ENCODE measurements at regions of chrX and their contacts with region 1.

Region 1: GRCh38 chrX:69222103-69223090 is 57.1 kb upstream of the PJA1 start:
- DNase-seq: peak; percentile 72
- H3K4me3 Mint-ChIP-seq: no peak overlapping the region
- H3K27ac Mint-ChIP-seq: no peak overlapping the region
- H3K4me1 Mint-ChIP-seq: no peaks in the 10 kb centered on the region
- H3K27me3 Mint-ChIP-seq: peaks cover 23% of the 10 kb centered on the region
- CTCF ChIP-seq: peak; percentile 66

Region 2: DNA sequence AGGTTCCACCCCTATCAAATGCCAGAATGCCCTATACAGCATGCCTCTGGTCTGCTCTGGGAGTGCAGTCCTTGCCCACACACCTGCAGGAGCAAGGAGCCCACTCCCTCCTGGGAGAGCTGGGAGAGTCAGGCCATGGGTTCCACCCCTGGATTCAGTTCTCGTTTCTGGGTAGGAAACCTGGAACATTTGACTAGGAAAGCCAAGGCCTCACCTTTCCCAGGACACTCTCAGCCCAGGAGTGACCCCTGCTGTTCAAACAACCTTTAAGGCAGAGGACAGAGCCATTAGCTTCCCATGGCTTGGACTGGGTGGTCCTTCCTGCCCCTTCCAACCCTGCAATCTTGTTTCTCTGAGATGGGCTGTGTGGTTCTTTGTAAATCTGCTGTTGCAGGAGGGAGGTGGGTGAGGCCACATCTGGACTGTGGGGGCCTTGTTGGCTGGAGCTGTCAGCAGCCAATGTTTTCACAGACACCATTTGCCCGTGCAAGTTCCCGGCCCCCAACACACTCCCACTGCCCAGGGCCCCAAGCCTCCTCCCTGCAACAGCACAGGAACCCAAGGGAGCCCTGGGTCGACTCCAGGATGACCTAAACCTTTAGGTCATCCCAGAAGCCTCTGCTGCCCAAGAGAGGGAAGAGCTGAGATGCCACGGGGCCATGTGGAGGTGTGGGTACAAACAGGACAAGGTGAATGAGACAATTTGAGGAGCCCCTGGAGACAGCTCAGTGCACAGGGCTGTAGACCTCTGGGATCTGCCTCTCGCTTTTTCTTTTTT is 161.6 kb before region 1 on chrX:
- CTCF ChIA-PET with region 1: interaction called, 13 read pairs
- POLR2A ChIA-PET with region 1: no interaction called
- intact Hi-C with region 1: loop called (anchors 1 kb)
- DNase-seq: peak; percentile 65
- H3K4me3 Mint-ChIP-seq: no peak overlapping the region
- H3K27ac Mint-ChIP-seq: no peak overlapping the region
- H3K4me1 Mint-ChIP-seq: no peaks in the 10 kb centered on the region
- H3K27me3 Mint-ChIP-seq: peaks cover 24% of the 10 kb centered on the region
- CTCF ChIP-seq: peak; percentile 27

Region 3: GRCh38 chrX:69133921-69134542 is 88.4 kb before region 1 on chrX:
- CTCF ChIA-PET with region 1: interaction called, 3 read pairs
- POLR2A ChIA-PET with region 1: no interaction called
- intact Hi-C with region 1: loop called (anchors 1 kb)
- DNase-seq: peak; percentile 65
- H3K4me3 Mint-ChIP-seq: no peak overlapping the region
- H3K27ac Mint-ChIP-seq: no peak overlapping the region
- H3K4me1 Mint-ChIP-seq: no peaks in the 10 kb centered on the region
- H3K27me3 Mint-ChIP-seq: peaks cover 63% of the 10 kb centered on the region
- CTCF ChIP-seq: peak; percentile 51

Region 4: DNA sequence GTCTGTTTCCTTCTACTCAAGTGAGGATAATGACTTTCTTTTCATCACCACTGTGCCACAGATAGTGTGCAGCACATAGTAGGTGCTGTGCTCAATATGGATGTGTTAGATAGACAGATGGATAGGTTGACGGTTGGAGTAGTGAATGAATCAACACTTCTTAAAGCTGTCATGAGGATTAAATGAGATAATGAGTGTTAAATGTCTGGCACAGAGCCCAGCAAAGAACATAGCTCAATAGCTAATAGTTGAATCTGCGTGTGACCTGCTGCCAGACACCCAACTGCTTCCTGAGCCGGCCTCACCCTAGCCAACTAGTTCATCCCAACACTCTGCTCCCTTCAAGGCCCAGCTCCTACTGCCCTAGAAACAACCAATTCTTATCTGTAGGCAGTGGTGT is 10.5 kb after region 1 on chrX:
- CTCF ChIA-PET with region 1: interaction called, 13 read pairs
- POLR2A ChIA-PET with region 1: no interaction called
- intact Hi-C with region 1: no loop called
- DNase-seq: peak; percentile 23
- H3K4me3 Mint-ChIP-seq: no peak overlapping the region
- H3K27ac Mint-ChIP-seq: no peak overlapping the region
- H3K4me1 Mint-ChIP-seq: no peaks in the 10 kb centered on the region
- H3K27me3 Mint-ChIP-seq: peaks cover 34% of the 10 kb centered on the region
- CTCF ChIP-seq: no peak

Region 5: GRCh38 chrX:69387567-69388487 is 165.4 kb after region 1 on chrX:
- CTCF ChIA-PET with region 1: interaction called, 8 read pairs
- POLR2A ChIA-PET with region 1: no interaction called
- intact Hi-C with region 1: loop called (anchors 1 kb)
- DNase-seq: peak; percentile 45
- H3K4me3 Mint-ChIP-seq: no peak overlapping the region
- H3K27ac Mint-ChIP-seq: no peak overlapping the region
- H3K4me1 Mint-ChIP-seq: no peaks in the 10 kb centered on the region
- H3K27me3 Mint-ChIP-seq: peaks cover 100% of the 10 kb centered on the region
- CTCF ChIP-seq: peak; percentile 83

Region 6: DNA sequence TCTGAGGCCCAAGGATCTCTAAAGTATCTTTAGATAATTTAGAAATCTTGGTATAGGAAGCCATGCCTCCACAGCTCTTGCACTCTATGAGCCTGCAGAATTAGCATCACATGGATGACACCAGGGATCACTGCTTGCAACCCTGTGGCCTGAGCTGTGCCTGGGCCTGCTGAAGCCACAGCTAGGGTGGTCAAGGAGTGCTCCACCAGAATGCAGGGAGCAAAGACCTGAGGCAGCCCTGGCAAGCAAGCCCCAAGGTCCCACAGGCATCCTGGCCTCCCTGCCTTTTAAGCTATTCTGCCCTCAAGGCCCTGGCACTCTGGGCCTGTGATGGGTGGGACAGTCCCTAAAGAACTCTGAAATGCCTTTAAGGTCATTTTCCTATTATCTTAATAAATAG is 176.5 kb after region 1 on chrX:
- CTCF ChIA-PET with region 1: no interaction called
- POLR2A ChIA-PET with region 1: no interaction called
- intact Hi-C with region 1: no loop called
- DNase-seq: no peak
- H3K4me3 Mint-ChIP-seq: no peak overlapping the region
- H3K27ac Mint-ChIP-seq: no peak overlapping the region
- H3K4me1 Mint-ChIP-seq: no peaks in the 10 kb centered on the region
- H3K27me3 Mint-ChIP-seq: peaks cover 85% of the 10 kb centered on the region
- CTCF ChIP-seq: no peak

Region 7: DNA sequence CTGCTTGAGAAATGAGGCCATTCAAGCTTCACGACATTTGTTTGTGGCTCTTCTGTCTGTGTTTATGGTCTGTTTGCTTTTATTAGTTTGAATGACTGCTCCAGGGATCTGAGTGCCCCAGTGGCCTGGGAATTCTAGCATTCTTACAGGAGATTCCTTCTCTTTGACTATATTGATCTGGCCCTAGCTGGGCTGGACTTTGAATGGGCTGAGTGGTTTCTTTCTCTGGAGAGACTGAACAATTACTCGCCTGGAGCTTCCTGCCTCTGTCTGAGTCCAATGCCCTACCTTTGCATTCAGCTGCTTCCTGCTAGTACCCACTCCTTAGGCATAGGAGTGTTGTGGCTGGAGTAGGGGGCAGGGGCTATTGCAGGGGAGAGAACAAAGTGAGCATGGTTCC is 342.3 kb after region 1 on chrX:
- CTCF ChIA-PET with region 1: no interaction called
- POLR2A ChIA-PET with region 1: no interaction called
- intact Hi-C with region 1: no loop called
- DNase-seq: no peak
- H3K4me3 Mint-ChIP-seq: no peak overlapping the region
- H3K27ac Mint-ChIP-seq: no peak overlapping the region
- H3K4me1 Mint-ChIP-seq: no peaks in the 10 kb centered on the region
- H3K27me3 Mint-ChIP-seq: peaks cover 67% of the 10 kb centered on the region
- CTCF ChIP-seq: no peak

Measured in MCF 10A (cell line).